ENCODE measurements at regions of chr3 and their contacts with region 1.

Region 1: DNA sequence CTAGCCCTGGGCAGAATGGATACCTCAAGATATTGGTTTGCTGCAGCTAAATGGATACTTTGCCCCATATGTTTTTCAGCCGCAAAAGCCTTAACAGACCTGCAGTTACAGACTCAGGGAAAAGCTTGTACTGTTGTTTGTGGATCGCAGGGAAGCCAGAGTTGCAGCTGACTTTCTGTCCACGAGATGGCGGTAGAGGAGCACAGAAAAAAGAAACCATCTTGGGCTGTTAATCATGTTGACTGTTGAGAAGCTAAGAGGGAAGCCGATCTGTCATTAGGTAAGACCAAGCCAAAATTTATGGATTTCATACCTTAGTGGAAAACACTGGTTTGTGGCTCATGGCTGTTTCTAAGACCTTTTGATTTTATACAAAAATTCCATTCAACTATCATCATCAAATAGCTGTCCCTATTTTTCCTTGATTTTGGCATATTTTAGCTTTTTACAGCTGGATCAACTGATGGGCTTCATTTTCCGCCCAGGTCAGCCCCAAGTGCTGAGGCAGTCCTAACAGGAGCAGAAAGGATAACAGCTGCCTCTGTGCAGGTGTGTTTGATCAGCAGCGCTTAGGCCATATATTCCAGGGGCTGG is 205.7 kb upstream of the ZPLD1 start:
- DNase-seq: no peak
- ATAC-seq: peak; percentile 57

Region 2: DNA sequence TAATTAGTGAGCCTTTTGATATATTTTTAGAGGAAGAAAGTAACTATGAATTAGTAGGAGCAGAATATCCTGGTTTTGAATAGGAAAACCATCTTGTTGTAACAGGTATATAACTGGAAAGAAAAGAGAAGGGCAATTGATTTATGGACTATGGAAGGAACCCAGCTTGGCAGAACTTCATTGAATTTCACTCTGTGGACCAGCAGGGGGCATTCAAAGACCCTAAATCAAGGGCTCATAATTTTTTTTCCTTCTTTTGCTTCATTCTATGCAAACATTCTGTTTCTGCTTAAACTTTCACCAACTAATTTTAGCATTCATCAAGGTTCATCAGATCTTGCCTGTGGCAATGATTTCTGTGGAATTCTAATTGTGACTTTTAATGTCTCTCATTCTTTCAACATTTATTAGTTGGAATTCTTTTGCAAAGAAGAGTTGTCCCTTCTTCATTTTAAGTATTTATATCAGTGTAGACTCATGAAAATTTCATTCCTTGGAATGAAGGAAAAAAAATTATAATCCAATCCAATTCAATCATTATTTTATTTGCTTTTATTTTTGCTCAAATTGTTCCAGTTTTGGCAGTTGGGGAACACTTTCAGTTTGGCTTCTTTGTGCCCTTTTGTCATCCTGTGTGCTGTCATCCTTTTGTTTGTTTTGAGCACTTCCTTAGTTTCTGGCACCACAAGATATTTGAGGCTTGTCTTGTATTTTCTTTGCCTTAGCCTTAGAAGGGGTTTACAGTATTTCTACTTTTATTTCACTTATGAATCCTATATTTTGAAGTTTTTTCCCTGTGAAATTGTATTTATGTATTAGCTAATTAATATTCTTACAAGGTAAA is 419.8 kb before region 1 on chr3:
- intact Hi-C with region 1: loop called (anchors 1 kb)
- DNase-seq: no peak
- ATAC-seq: no peak

Region 3: GRCh38 chr3:101940521-101941317 is 288.4 kb before region 1 on chr3:
- intact Hi-C with region 1: loop called (anchors 10 kb)
- DNase-seq: peak; percentile 84
- ATAC-seq: peak; percentile 86

Region 4: DNA sequence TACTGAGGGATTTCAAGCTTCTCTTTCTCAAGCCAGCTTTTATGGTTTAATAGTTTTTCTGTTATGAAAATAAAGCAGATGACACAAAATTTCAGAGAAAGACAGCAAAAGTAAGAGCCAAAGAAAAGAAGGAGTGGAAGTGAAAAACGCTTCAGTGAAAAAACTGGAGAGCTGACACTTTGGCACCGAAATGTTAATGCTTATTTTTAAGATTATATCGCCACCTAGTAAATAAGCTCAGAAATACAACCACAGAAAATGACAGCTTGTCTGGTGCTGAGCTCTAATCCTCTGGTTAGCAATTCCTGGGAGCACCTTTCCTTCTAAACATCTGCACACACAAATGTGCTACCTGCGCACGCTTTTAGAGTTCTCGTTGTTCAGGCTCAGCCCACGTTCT is 307.3 kb after region 1 on chr3:
- intact Hi-C with region 1: loop called (anchors 2 kb)
- DNase-seq: no peak
- ATAC-seq: no peak

Measured in Right ventricle myocardium inferior (tissue), 1 donor.